ENCODE measurements at regions of chr7 and their contacts with region 1.

Region 1: GRCh38 chr7:30062591-30062990 is 34.4 kb downstream of the PLEKHA8 start:
- DNase-seq: no peak
- H3K4me3 ChIP-seq: no peak overlapping the region
- H3K27ac ChIP-seq: no peak overlapping the region
- H3K27me3 ChIP-seq: no peaks in the 10 kb centered on the region
- CTCF ChIP-seq: peak; percentile 79

Region 2: GRCh38 chr7:29878081-29878688 is 184.4 kb before region 1 on chr7:
- CTCF ChIA-PET with region 1: interaction called, 34 read pairs
- POLR2A ChIA-PET with region 1: no interaction called
- DNase-seq: peak; percentile 20
- H3K4me3 ChIP-seq: no peak overlapping the region
- H3K27ac ChIP-seq: no peak overlapping the region
- H3K27me3 ChIP-seq: peaks cover 7% of the 10 kb centered on the region
- CTCF ChIP-seq: peak; percentile 66

Region 3: DNA sequence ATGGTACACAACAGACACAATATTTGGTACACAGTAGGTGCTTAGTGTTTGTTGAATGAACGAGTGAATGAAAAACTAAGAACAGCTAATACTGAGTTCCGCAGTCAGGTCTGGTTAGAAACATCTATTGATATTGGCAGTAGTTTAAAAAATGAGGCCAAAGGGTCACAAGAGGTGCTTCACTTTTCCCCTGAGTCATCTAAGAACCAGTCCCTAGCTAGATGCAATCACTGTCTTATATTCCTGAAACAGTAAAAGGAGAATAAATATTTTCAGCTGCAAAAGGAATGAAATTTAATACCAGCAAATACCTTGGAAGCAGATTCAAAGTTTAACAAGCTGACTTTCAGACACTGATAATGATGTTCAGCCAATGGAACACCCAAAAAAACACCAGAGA is 127.5 kb before region 1 on chr7:
- CTCF ChIA-PET with region 1: interaction called, 10 read pairs
- POLR2A ChIA-PET with region 1: no interaction called
- DNase-seq: no peak
- H3K4me3 ChIP-seq: no peak overlapping the region
- H3K27ac ChIP-seq: no peak overlapping the region
- H3K27me3 ChIP-seq: no peaks in the 10 kb centered on the region
- CTCF ChIP-seq: no peak

Region 4: DNA sequence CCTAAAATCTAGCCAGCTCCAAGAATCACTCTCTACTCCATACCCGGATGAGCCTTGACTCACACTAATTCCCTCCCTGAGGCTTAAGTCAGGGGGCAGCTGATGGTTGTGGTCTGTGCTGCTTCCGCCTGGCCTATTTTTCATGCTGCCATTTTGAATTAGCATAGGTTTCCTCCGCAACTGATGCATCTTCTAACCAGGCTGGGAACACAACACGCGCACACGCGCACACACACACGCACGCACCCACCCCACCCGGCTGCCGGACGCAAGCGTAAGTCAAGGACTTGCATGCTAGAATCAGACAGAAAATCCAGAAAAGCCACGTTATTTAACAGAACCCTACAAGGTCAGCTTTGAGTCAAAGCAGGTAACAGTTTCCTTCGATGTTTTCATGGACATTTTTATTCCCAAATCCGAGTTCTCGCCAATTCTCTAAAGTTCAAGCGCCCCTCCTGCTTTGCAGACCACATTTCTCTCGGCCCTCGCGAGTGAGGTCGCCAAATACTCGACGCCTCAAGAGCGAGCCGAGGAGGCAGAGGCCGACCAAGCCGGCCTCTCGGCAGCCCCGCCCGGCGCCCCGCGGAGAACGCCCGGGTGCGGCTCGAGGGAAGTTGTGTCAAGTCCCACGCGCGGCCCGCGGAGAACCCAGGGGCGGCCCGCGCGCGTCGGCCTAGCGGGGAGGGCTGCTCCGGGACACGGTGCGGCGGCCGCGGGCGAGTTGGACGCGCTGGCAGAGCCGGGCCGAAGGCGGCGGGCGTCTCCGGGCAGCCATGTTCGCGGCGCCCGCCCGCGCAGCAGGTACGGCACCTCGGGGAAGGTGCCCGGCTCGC is 74.0 kb before region 1 on chr7:
- CTCF ChIA-PET with region 1: interaction called, 11 read pairs
- POLR2A ChIA-PET with region 1: no interaction called
- DNase-seq: no peak
- H3K4me3 ChIP-seq: peak overlapping the region; percentile 82
- H3K27ac ChIP-seq: peak overlapping the region; percentile 91
- H3K27me3 ChIP-seq: no peaks in the 10 kb centered on the region
- CTCF ChIP-seq: no peak

Region 5: DNA sequence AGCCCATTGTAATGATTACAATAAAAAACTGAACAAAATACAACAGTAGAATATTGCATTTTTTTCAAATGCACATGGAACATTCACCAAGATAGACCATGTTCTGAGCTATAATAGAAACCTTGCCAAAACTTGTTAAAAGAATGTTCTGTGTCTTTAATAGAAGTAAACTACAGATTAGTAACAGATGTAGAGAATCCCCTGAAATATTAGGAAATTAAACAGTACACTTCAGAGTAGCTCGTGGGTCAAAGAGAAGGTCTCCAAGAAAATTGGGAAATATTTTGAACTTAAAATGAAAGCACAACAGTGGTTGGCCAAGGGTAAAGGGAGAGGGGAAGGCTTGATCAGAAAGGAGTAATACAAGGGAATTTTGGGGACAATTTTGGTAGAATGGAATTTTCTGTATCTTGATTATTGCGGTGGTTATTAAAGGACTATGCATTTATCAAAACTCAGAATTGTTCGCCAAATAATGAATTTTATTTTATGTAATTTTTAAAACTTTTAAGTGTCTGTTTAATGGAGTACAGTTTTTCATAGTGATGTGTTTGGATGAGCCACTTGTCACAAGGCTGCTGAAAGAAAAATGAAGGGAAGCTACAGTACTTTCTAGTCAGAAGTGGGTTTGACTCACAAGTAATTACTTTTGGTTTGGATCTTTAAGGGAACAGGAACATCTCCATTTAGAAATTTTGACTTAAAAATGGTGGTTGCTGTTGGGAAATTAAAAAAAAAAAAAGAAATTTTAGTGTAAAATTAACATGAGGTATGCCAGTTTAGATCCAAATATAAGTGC is 24.2 kb before region 1 on chr7:
- CTCF ChIA-PET with region 1: interaction called, 36 read pairs
- POLR2A ChIA-PET with region 1: no interaction called
- DNase-seq: no peak
- H3K4me3 ChIP-seq: no peak overlapping the region
- H3K27ac ChIP-seq: no peak overlapping the region
- H3K27me3 ChIP-seq: no peaks in the 10 kb centered on the region
- CTCF ChIP-seq: no peak

Region 6: DNA sequence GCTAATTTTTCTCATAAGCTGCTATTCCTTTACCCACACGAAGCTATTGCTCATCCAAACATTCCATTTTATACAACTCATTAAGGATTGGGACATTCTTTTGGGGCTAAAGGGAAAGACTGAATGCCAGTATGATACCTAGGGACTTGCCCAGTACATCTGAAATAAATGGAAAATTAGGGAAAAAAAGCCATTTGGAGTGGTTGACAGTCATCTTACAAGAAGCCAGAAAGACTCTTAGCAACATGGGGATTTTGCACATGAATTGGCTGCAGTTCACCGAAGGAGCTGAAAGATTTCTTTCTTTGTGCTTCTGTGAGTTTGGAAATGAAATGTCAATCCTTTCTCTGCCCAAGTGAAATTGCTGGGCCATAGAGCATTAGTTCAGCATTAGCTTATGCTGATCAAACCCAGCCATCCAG is 28.9 kb after region 1 on chr7:
- CTCF ChIA-PET with region 1: interaction called, 17 read pairs
- POLR2A ChIA-PET with region 1: no interaction called
- DNase-seq: peak; percentile 16
- H3K4me3 ChIP-seq: no peak overlapping the region
- H3K27ac ChIP-seq: peak overlapping the region; percentile 58
- H3K27me3 ChIP-seq: no peaks in the 10 kb centered on the region
- CTCF ChIP-seq: no peak

Region 7: GRCh38 chr7:30117877-30118276 is 55.3 kb after region 1 on chr7:
- CTCF ChIA-PET with region 1: no interaction called
- POLR2A ChIA-PET with region 1: no interaction called
- DNase-seq: no peak
- H3K4me3 ChIP-seq: no peak overlapping the region
- H3K27ac ChIP-seq: no peak overlapping the region
- H3K27me3 ChIP-seq: no peaks in the 10 kb centered on the region
- CTCF ChIP-seq: no peak

Measured in AG04450 (cell line).